ENCODE measurements at regions of chr1 and their contacts with region 1.

Region 1: DNA sequence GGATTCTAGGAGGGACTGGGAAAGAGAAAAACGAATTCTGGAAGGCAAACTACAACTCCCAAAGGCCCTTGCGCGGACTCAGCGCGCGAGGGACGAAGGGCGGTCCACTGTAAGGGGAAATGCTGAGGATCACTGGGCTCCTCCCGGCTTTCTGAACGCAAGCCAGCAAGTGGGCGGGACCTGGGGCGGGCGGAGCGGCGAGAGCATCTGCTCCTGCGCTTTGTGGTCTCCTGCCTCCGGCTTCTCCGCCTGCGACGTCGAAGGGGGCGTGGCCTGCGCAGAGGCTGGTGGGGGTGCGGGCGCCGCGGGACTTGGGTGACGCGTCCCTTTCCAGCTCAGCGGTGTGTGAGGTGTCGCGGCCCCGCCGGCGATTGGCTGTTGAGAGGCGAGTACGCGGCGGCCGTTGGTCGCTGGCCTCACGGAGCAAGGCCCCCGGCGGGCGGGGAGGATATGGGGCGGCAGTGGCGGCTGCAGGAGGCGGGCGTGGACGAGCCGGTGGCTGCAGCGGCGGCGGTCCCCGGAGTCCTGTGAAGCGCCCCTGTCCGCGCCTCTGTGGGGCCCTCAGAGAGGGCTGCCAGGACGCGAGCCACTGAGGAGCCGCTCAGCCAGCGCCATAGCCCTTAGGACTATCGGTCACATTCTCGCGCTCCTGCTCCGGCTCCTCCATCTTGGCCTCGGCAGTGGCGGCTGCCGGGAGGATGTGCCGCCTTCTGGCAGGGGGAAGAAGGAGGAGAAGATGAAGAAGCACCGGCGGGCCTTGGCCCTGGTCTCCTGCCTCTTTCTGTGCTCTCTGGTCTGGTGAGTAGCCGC is at the start of gene SUCO:
- DNase-seq: peak; percentile 100
- ATAC-seq: peak; percentile 98 to 99
- H3K4me3 ChIP-seq: peak within 1 kb of the TSS; percentile 93
- H3K27ac ChIP-seq: peak within 1 kb of the TSS; percentile 97
- H3K4me1 ChIP-seq: no peaks in the 10 kb centered on the region
- H3K27me3 ChIP-seq: no peaks in the 10 kb centered on the region
- total RNA-seq, gene SUCO: 31.4 to 36.1 (median 32.0) TPM

Region 2: GRCh38 chr1:172449585-172450534 is 83.0 kb before region 1 on chr1:
- intact Hi-C with region 1: loop called in 2 of 4 experiments (anchors 5 to 10 kb)
- DNase-seq: peak; percentile 58 to 78 (median 71)
- ATAC-seq: peak; percentile 88
- H3K4me3 ChIP-seq: peak overlapping the region; percentile 16
- H3K27ac ChIP-seq: peak overlapping the region; percentile 21
- H3K4me1 ChIP-seq: peaks cover 3% of the 10 kb centered on the region
- H3K27me3 ChIP-seq: no peaks in the 10 kb centered on the region